ENCODE measurements at regions of chr16 and their contacts with region 1.

Region 1: GRCh38 chr16:84555418-84556195 is 51.1 kb upstream of the MEAK7 start:
- DNase-seq: peak in 3 of 10 donors; percentile 18 to 44 (median 32)
- ATAC-seq: peak in 1 of 2 donors; percentile 21
- H3K4me3 Mint-ChIP-seq: peak overlapping the region in 1 of 10 donors; percentile 6
- H3K27ac Mint-ChIP-seq: peak overlapping the region in 9 of 10 donors; percentile 4 to 82 (median 49)
- H3K4me1 Mint-ChIP-seq: peaks cover 28 to 47% (median 40%) of the 10 kb centered on the region in 4 donors
- H3K27me3 Mint-ChIP-seq: no peaks in the 10 kb centered on the region

Region 2: DNA sequence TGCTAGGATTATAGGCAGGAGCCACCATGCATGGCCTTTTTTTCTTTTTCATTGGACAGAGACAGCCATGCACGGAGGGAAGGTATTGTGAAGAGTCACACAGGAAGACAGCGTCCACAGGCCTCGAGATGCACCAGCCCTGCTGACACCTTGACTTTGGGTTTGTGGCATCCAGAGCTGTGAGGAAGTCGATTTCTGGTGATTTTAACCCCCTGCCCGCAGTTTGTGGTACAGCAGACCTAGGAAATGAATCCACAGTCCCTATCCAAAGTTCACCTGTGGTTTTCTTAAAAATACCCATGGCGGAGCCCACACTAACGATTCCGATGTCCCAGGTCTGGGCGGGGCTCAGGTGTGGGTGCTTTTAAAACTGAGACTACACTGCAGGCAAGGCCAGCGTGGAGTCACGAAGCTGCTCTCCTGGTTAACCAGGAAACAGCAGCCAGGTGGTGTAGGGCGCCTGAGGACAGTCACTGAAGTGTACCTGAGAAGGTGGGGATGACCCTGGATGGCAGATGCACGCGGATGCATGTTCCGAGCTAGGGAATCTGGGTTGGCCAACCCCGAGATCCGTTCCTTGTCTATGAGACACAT is 36.8 kb before region 1 on chr16:
- POLR2A ChIA-PET with region 1: interaction called, 16 read pairs
- DNase-seq: peak in 9 of 10 donors; percentile 40 to 76 (median 65)
- ATAC-seq: peak; percentile 37 to 52
- H3K4me3 Mint-ChIP-seq: peak overlapping the region; percentile 19 to 71 (median 52)
- H3K27ac Mint-ChIP-seq: peak overlapping the region; percentile 77 to 93 (median 86)
- H3K4me1 Mint-ChIP-seq: peaks cover 24 to 66% (median 60%) of the 10 kb centered on the region in 4 donors
- H3K27me3 Mint-ChIP-seq: no peaks in the 10 kb centered on the region

Region 3: DNA sequence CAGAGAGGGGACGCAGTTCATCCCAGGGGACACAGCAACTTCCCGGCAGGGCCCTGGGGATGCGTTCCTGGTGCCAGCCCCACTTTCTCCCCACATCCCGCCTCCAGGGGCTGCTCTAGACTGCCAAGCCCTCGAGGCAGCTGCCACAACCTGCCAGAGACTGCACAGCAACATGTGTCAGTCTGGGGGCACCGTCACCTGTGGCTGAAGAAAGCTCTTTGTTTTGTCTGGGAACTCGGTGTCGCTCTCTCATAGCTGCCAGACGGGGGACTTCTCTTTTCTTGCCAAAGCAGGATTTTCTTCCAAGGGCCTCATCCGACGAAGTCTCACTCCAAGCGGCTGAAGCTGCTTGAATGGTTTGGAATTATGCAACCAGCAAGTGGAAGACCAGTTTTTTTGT is 18.6 kb after region 1 on chr16:
- POLR2A ChIA-PET with region 1: no interaction called
- DNase-seq: no peak
- ATAC-seq: peak in 1 of 2 donors; percentile 25
- H3K4me3 Mint-ChIP-seq: no peak overlapping the region
- H3K27ac Mint-ChIP-seq: peak overlapping the region in 7 of 10 donors; percentile 19 to 69 (median 35)
- H3K4me1 Mint-ChIP-seq: peaks cover 15 to 78% (median 61%) of the 10 kb centered on the region in 4 donors
- H3K27me3 Mint-ChIP-seq: no peaks in the 10 kb centered on the region